ENCODE measurements at regions of chr10 and their contacts with region 1.

Region 1: GRCh38 chr10:77179015-77179695 is 458.5 kb downstream of the KCNMA1 start:
- DNase-seq: peak; percentile 47
- H3K4me3 ChIP-seq: no peak overlapping the region
- H3K27ac ChIP-seq: no peak overlapping the region
- H3K4me1 ChIP-seq: peaks cover 12% of the 10 kb centered on the region
- H3K27me3 ChIP-seq: no peaks in the 10 kb centered on the region
- CTCF ChIP-seq: no peak
- POLR2A ChIP-seq: no peak

Region 2: DNA sequence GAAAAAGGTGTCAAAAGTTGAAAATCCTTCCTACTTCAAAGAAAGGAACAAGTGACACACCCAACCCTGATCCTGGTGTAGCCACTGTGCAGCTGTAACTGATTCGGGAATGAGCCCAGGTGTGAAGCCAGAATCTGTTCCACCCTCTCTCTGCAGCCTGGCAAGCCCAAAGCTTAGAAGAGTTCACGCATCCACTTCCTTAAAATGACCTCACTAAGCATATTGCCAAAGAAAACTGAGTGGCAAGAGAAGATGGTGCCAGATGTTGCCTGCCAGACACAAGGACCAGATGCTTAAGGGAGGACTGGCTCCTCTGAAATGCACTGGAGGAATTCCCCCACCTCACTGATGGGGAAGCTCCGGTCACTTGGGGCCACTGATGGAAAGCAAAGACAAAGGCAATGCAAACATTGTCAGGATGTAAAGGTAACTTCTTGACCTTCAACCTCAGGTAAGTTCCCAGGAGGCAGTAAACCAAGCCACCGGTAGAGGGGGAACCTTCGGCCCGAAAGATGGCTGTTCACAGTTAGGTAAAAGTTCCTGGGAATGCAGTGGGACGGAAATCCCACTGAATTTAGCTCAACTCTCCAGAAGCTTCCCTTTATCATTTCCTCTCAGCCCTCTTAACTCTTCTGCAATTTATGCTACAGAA is 96.4 kb before region 1 on chr10:
- CTCF ChIA-PET with region 1: no interaction called
- POLR2A ChIA-PET with region 1: no interaction called
- dilution Hi-C with region 1: no loop called
- intact Hi-C with region 1: no loop called
- DNase-seq: no peak
- H3K4me3 ChIP-seq: no peak overlapping the region
- H3K27ac ChIP-seq: no peak overlapping the region
- H3K4me1 ChIP-seq: no peaks in the 10 kb centered on the region
- H3K27me3 ChIP-seq: no peaks in the 10 kb centered on the region
- CTCF ChIP-seq: no peak
- POLR2A ChIP-seq: no peak

Region 3: DNA sequence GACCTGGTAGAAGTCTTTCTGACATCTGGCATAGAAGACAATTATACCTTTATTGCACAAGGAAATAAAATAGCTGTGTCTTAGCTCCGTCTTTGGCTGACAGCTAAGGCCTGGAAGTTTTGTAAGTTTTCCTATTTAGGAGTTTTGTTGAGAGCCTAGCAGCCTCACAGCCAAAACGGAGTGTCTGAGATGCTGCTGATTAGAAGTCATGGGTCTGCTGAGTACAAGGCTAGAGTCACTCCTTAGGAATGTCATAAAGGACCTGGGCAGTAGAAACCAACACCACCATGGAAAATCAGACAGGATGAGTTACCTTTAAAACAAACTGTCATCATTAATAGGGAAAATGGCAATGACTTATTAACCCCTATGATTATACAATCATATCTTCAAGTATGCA is 15.9 kb after region 1 on chr10:
- CTCF ChIA-PET with region 1: interaction called, 10 read pairs
- POLR2A ChIA-PET with region 1: no interaction called
- dilution Hi-C with region 1: no loop called
- intact Hi-C with region 1: no loop called
- DNase-seq: no peak
- H3K4me3 ChIP-seq: no peak overlapping the region
- H3K27ac ChIP-seq: no peak overlapping the region
- H3K4me1 ChIP-seq: no peaks in the 10 kb centered on the region
- H3K27me3 ChIP-seq: peaks cover 2 to 3% of the 10 kb centered on the region in 2 experiments
- CTCF ChIP-seq: no peak
- POLR2A ChIP-seq: no peak

Measured in endothelial cell of umbilical vein (primary cell).